ENCODE measurements at regions of chr5 and their contacts with region 1.

Region 1: GRCh38 chr5:18465833-18466591 is 831.8 kb downstream of the TAF11L14 start:
- DNase-seq: peak; percentile 78
- H3K4me3 Mint-ChIP-seq: no peak overlapping the region
- H3K27ac Mint-ChIP-seq: no peak overlapping the region
- H3K4me1 Mint-ChIP-seq: peaks cover 6% of the 10 kb centered on the region
- H3K27me3 Mint-ChIP-seq: no peaks in the 10 kb centered on the region
- CTCF ChIP-seq: peak; percentile 63

Region 2: GRCh38 chr5:18000744-18001143 is 465.3 kb before region 1 on chr5:
- CTCF ChIA-PET with region 1: no interaction called
- POLR2A ChIA-PET with region 1: no interaction called
- intact Hi-C with region 1: no loop called
- DNase-seq: no peak
- H3K4me3 Mint-ChIP-seq: no peak overlapping the region
- H3K27ac Mint-ChIP-seq: no peak overlapping the region
- H3K4me1 Mint-ChIP-seq: no peaks in the 10 kb centered on the region
- H3K27me3 Mint-ChIP-seq: no peaks in the 10 kb centered on the region
- CTCF ChIP-seq: no peak

Region 3: GRCh38 chr5:18393589-18394442 is 72.2 kb before region 1 on chr5:
- CTCF ChIA-PET with region 1: interaction called, 9 read pairs
- POLR2A ChIA-PET with region 1: no interaction called
- intact Hi-C with region 1: loop called (anchors 2 kb)
- DNase-seq: peak; percentile 83
- H3K4me3 Mint-ChIP-seq: no peak overlapping the region
- H3K27ac Mint-ChIP-seq: no peak overlapping the region
- H3K4me1 Mint-ChIP-seq: no peaks in the 10 kb centered on the region
- H3K27me3 Mint-ChIP-seq: no peaks in the 10 kb centered on the region
- CTCF ChIP-seq: peak; percentile 90

Region 4: GRCh38 chr5:18438126-18438525 is 27.9 kb before region 1 on chr5:
- CTCF ChIA-PET with region 1: interaction called, 10 read pairs
- POLR2A ChIA-PET with region 1: no interaction called
- intact Hi-C with region 1: no loop called
- DNase-seq: no peak
- H3K4me3 Mint-ChIP-seq: no peak overlapping the region
- H3K27ac Mint-ChIP-seq: no peak overlapping the region
- H3K4me1 Mint-ChIP-seq: no peaks in the 10 kb centered on the region
- H3K27me3 Mint-ChIP-seq: no peaks in the 10 kb centered on the region
- CTCF ChIP-seq: no peak

Region 5: DNA sequence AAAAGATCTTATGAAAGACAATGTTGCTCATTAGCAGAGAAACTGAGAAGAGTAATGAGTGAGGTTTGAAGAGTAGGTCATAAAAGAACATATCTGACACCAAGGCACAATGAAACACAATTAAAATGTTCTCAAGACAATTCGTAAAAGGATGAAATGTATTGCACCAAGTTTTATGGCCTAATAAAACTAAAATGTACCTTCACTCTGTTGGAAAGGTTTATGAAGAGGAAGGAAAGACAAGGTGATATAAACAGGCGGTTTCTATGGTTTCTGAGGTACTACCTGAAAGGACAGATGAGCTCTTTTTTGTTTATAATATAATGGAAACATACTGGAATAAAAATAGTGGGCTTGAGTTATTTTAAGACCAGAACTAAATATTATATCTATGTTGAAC is 10.5 kb before region 1 on chr5:
- CTCF ChIA-PET with region 1: interaction called, 26 read pairs
- POLR2A ChIA-PET with region 1: no interaction called
- intact Hi-C with region 1: no loop called
- DNase-seq: no peak
- H3K4me3 Mint-ChIP-seq: no peak overlapping the region
- H3K27ac Mint-ChIP-seq: no peak overlapping the region
- H3K4me1 Mint-ChIP-seq: no peaks in the 10 kb centered on the region
- H3K27me3 Mint-ChIP-seq: no peaks in the 10 kb centered on the region
- CTCF ChIP-seq: no peak

Region 6: GRCh38 chr5:18686253-18686652 is 220.2 kb after region 1 on chr5:
- CTCF ChIA-PET with region 1: interaction called, 21 read pairs
- POLR2A ChIA-PET with region 1: no interaction called
- intact Hi-C with region 1: no loop called
- DNase-seq: no peak
- H3K4me3 Mint-ChIP-seq: no peak overlapping the region
- H3K27ac Mint-ChIP-seq: no peak overlapping the region
- H3K4me1 Mint-ChIP-seq: no peaks in the 10 kb centered on the region
- H3K27me3 Mint-ChIP-seq: no peaks in the 10 kb centered on the region
- CTCF ChIP-seq: no peak

Region 7: DNA sequence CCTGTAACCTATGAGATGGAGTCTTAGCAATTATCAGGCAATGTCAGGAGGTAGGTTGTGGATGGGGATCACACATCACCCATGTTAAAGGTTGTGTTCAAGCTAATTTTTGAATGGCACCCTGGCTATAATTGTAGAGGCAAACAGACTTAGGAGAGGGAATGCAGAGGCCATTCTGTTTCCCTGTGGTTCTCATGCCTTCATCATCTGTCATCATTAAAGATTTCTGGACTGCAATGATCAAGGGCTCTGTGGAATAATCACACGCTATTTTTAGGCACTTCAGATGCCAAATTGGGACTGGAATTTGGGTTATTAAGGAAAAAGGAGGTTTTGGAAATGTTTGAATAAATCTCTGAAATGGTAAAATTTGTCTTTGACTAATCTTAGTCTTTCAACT is 233.7 kb after region 1 on chr5:
- CTCF ChIA-PET with region 1: interaction called, 92 read pairs
- POLR2A ChIA-PET with region 1: no interaction called
- intact Hi-C with region 1: loop called (anchors 1 kb)
- DNase-seq: no peak
- H3K4me3 Mint-ChIP-seq: no peak overlapping the region
- H3K27ac Mint-ChIP-seq: no peak overlapping the region
- H3K4me1 Mint-ChIP-seq: peaks cover 7% of the 10 kb centered on the region
- H3K27me3 Mint-ChIP-seq: no peaks in the 10 kb centered on the region
- CTCF ChIP-seq: no peak

Region 8: DNA sequence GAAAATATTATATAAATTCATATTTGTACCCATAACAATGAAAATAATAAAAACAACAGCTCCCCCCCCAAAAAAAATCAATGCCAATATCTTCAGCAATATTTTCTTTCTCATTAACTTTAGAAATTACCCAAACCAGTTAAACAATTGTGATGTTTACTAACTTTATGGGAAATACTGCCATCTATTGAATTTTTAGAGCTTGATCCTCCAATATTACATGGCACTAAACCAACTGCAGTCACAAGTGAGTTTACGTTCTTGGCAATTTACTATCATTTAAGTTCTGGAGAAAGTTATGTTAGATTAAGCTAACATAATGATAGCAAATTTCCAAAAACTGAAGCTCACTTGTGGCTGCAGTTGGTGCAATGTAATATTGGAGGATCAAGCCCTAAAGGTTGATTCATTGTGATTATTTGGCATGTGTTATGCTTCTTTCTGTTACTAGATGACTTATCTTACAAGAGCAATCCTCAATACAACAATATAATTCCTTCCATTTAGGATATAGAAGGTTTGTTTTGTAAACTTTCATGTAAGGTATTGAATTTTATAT is 1142.5 kb after region 1 on chr5:
- CTCF ChIA-PET with region 1: interaction called, 16 read pairs
- POLR2A ChIA-PET with region 1: no interaction called
- intact Hi-C with region 1: loop called (anchors 2 kb)
- DNase-seq: peak; percentile 38
- H3K4me3 Mint-ChIP-seq: no peak overlapping the region
- H3K27ac Mint-ChIP-seq: no peak overlapping the region
- H3K4me1 Mint-ChIP-seq: peaks cover 9% of the 10 kb centered on the region
- H3K27me3 Mint-ChIP-seq: no peaks in the 10 kb centered on the region
- CTCF ChIP-seq: peak; percentile 32